ENCODE measurements at regions of chr9 and their contacts with region 1.

Region 1: GRCh38 chr9:71783120-71783530 is 14.8 kb upstream of the CEMIP2 start:
- DNase-seq: peak; percentile 74 to 96 (median 82)
- ATAC-seq: peak; percentile 94
- H3K4me3 ChIP-seq: peak overlapping the region; percentile 8
- H3K4me3 Mint-ChIP-seq: peak overlapping the region; percentile 64
- H3K27ac ChIP-seq: peak overlapping the region; percentile 81 to 90
- H3K27ac Mint-ChIP-seq: peak overlapping the region; percentile 97
- H3K4me1 ChIP-seq: peaks cover 32% of the 10 kb centered on the region
- H3K4me1 Mint-ChIP-seq: peaks cover 51% of the 10 kb centered on the region
- H3K27me3 ChIP-seq: no peaks in the 10 kb centered on the region
- H3K27me3 Mint-ChIP-seq: no peaks in the 10 kb centered on the region
- CTCF ChIP-seq: peak; percentile 65

Region 2: GRCh38 chr9:71754151-71754550 is 29.0 kb before region 1 on chr9:
- CTCF ChIA-PET with region 1: no interaction called
- POLR2A ChIA-PET with region 1: no interaction called
- intact Hi-C with region 1: no loop called
- DNase-seq: no peak
- ATAC-seq: no peak
- H3K4me3 ChIP-seq: no peak overlapping the region
- H3K4me3 Mint-ChIP-seq: no peak overlapping the region
- H3K27ac ChIP-seq: no peak overlapping the region
- H3K27ac Mint-ChIP-seq: no peak overlapping the region
- H3K4me1 ChIP-seq: peaks cover 16% of the 10 kb centered on the region
- H3K4me1 Mint-ChIP-seq: peaks cover 74% of the 10 kb centered on the region
- H3K27me3 ChIP-seq: no peaks in the 10 kb centered on the region
- H3K27me3 Mint-ChIP-seq: no peaks in the 10 kb centered on the region
- CTCF ChIP-seq: no peak

Region 3: DNA sequence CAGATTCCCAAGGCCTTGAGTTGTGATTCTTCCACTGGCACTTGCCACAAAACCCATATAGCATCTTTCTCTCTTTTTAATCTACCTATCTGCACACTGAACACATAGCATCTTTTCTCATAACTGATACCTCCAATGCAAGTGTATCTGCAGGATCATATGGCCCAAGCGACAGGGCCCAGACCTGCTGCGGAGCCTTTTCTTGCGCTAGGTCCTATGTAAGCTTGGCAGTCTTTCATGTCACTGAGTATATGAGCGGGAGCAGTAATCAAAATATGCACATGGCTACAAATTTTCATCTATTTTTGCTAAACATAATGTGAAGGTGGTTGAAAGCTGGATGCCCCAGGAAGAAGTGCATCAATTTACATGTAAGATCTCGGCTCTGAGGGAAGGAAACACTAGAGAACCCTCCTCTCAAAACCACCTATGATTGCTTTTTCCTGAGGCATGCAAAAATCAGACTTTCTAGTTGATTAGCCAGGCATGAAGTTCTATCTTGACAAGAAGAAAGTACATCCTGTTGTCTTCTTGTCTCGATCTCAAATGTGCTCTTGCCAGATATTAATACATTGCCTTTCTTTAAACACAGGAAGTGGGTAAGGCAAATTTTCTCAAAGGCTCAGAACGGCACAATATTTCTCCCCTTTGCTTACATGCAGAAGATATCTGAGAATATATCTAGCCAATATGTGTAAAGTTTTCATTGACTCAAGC is 12.1 kb after region 1 on chr9:
- CTCF ChIA-PET with region 1: interaction called, 15 read pairs
- POLR2A ChIA-PET with region 1: interaction called, 140 read pairs
- intact Hi-C with region 1: loop called in 1 of 2 experiments (anchors 1 kb)
- DNase-seq: peak in 6 of 14 experiments; percentile 14 to 89 (median 59)
- ATAC-seq: peak; percentile 88
- H3K4me3 ChIP-seq: no peak overlapping the region
- H3K4me3 Mint-ChIP-seq: peak overlapping the region; percentile 60
- H3K27ac ChIP-seq: peak overlapping the region; percentile 46 to 86
- H3K27ac Mint-ChIP-seq: peak overlapping the region; percentile 94
- H3K4me1 ChIP-seq: peaks cover 57% of the 10 kb centered on the region
- H3K4me1 Mint-ChIP-seq: peaks cover 73% of the 10 kb centered on the region
- H3K27me3 ChIP-seq: no peaks in the 10 kb centered on the region
- H3K27me3 Mint-ChIP-seq: no peaks in the 10 kb centered on the region
- CTCF ChIP-seq: no peak

Region 4: DNA sequence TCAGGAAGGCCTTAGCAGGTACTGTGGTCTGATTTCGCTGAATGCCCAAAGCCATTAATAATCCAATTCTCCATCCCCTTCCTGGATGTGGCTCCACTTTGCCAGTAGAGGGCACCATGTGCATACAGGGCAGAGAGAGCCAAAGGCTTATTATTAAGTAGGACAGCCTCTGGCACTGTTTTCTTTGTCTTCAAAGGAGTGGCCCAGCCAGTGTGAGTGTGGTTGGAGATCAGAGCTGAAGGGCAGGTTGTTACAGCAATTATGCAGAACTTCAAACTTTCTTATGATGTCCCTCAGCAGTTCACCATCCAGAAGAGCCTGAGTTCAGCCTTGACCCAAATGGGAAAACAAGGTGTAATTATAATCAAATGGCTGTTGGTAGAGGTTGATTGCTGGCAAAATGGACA is 23.8 kb after region 1 on chr9:
- CTCF ChIA-PET with region 1: interaction called, 34 read pairs
- POLR2A ChIA-PET with region 1: interaction called, 17 read pairs
- intact Hi-C with region 1: loop called in 1 of 2 experiments (anchors 1 kb)
- DNase-seq: peak; percentile 31 to 81 (median 46)
- ATAC-seq: peak; percentile 90
- H3K4me3 ChIP-seq: no peak overlapping the region
- H3K4me3 Mint-ChIP-seq: no peak overlapping the region
- H3K27ac ChIP-seq: no peak overlapping the region
- H3K27ac Mint-ChIP-seq: no peak overlapping the region
- H3K4me1 ChIP-seq: peaks cover 10% of the 10 kb centered on the region
- H3K4me1 Mint-ChIP-seq: peaks cover 14% of the 10 kb centered on the region
- H3K27me3 ChIP-seq: no peaks in the 10 kb centered on the region
- H3K27me3 Mint-ChIP-seq: no peaks in the 10 kb centered on the region
- CTCF ChIP-seq: peak; percentile 90

Measured in CD4-positive, alpha-beta T cell (primary cell).